Activated naive CD4-positive, alpha-beta T cell treated with anti-CD3 and anti-CD28 coated beads for 36 hours (primary cell): ENCODE measurements at regions of chr4 and their contacts with region 1.

Region 1: DNA sequence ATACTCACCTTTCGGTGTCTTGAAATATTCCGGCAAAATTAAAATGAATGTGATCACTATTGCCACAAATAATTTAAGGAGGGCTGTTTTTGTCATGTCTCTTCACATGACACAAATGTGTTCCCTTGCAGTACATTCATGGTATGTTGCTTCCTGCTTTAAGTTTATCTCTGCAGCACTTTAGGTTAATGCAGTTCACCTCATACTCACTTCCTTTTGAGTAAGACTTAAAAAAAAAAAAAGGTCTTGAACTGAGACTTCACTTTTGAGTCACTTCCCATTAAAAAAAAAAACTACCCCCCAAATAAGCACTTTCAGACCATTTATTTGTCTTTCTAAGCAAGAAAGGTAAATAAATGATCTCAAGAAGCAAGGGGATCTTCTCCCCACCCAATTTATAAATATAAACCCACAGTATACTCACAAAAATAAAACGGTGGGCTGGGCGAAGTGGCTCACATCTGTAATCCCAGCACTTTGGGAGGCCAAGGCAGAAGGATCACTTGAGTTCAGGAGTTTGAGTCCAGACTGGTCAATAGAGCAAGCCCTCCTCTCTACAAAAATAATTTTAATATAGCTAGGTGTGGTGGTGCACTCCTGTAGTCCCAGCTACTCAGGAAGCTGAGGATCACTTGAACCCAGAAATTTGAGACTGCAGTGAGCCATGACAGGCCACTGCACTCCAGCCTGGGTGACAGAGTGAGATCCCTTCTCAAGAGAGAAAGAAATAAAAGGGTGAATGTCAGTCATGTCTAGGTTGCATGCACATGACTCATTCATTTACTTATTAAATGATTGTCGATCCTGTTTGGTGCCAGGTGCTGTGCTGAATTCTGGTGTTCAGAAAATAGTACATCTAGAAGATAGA is at the start of gene TMEM156:
- DNase-seq: peak; percentile 65
- H3K4me3 Mint-ChIP-seq: peak within 1 kb of the TSS; percentile 77
- H3K27ac Mint-ChIP-seq: peak within 1 kb of the TSS; percentile 89
- H3K4me1 Mint-ChIP-seq: peaks cover 57% of the 10 kb centered on the region
- H3K27me3 Mint-ChIP-seq: no peaks in the 10 kb centered on the region
- total RNA-seq, gene TMEM156: 10.2 to 11.3 TPM

Region 2: GRCh38 chr4:37891260-37892159 is 1140.9 kb before region 1 on chr4:
- CTCF ChIA-PET with region 1: no interaction called
- intact Hi-C with region 1: loop called (anchors 5 kb)
- DNase-seq: peak; percentile 74
- H3K4me3 Mint-ChIP-seq: peak overlapping the region; percentile 89
- H3K27ac Mint-ChIP-seq: peak overlapping the region; percentile 86
- H3K4me1 Mint-ChIP-seq: peaks cover 37% of the 10 kb centered on the region
- H3K27me3 Mint-ChIP-seq: peaks cover 8% of the 10 kb centered on the region

Region 3: GRCh38 chr4:38730830-38731646 is 301.4 kb before region 1 on chr4:
- CTCF ChIA-PET with region 1: no interaction called
- intact Hi-C with region 1: no loop called
- DNase-seq: peak; percentile 93
- H3K4me3 Mint-ChIP-seq: no peak overlapping the region
- H3K27ac Mint-ChIP-seq: no peak overlapping the region
- H3K4me1 Mint-ChIP-seq: peaks cover 16% of the 10 kb centered on the region
- H3K27me3 Mint-ChIP-seq: no peaks in the 10 kb centered on the region

Region 4: GRCh38 chr4:38815885-38816782 is 216.3 kb before region 1 on chr4:
- CTCF ChIA-PET with region 1: interaction called, 3 read pairs
- intact Hi-C with region 1: loop called (anchors 5 kb)
- DNase-seq: no peak
- H3K4me3 Mint-ChIP-seq: no peak overlapping the region
- H3K27ac Mint-ChIP-seq: peak overlapping the region; percentile 29
- H3K4me1 Mint-ChIP-seq: peaks cover 25% of the 10 kb centered on the region
- H3K27me3 Mint-ChIP-seq: no peaks in the 10 kb centered on the region

Region 5: GRCh38 chr4:38837849-38838248 is 194.6 kb before region 1 on chr4:
- CTCF ChIA-PET with region 1: no interaction called
- intact Hi-C with region 1: no loop called
- DNase-seq: no peak
- H3K4me3 Mint-ChIP-seq: no peak overlapping the region
- H3K27ac Mint-ChIP-seq: peak overlapping the region; percentile 43
- H3K4me1 Mint-ChIP-seq: peaks cover 23% of the 10 kb centered on the region
- H3K27me3 Mint-ChIP-seq: no peaks in the 10 kb centered on the region

Region 6: GRCh38 chr4:38939165-38939564 is 93.3 kb before region 1 on chr4:
- CTCF ChIA-PET with region 1: no interaction called
- intact Hi-C with region 1: loop called (anchors 1 kb)
- DNase-seq: no peak
- H3K4me3 Mint-ChIP-seq: no peak overlapping the region
- H3K27ac Mint-ChIP-seq: peak overlapping the region; percentile 27
- H3K4me1 Mint-ChIP-seq: peaks cover 31% of the 10 kb centered on the region
- H3K27me3 Mint-ChIP-seq: no peaks in the 10 kb centered on the region

Region 7: DNA sequence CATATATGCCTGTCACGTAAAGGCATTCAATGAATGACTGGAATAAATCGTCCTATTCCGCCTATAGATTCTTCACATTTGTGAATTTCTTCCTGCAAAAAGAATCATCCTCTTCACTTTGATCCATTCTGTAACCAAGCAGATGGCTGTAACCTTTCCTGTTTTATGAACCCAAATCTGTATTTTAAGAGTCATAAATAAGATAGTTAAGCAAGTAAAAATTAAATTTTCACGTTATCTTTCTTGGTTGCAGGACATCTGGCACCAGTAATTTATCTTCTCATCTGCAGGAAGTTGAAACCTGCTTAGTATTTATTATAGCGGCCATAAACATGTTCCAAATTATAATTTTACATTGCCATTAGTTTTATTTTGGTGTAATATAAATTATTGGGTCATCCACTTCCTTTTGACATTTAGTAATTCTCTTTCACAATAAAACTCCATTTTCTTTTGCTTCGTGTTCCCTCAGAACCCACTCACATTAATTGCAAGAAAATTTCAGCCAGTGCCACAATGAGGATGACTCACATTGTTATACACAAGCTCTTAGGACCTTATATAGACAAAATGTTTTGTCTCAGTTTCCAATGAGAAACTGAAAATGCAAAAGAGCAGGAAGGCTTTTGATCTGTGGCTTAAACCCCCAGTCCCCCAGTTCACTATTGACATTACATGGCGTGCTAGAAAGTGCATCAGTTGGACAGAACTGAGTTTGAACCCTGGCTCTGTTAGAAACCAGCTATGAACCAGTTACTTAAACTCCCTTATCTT is 51.4 kb before region 1 on chr4:
- CTCF ChIA-PET with region 1: no interaction called
- intact Hi-C with region 1: loop called (anchors 1 kb)
- DNase-seq: peak; percentile 51
- H3K4me3 Mint-ChIP-seq: no peak overlapping the region
- H3K27ac Mint-ChIP-seq: peak overlapping the region; percentile 87
- H3K4me1 Mint-ChIP-seq: peaks cover 62% of the 10 kb centered on the region
- H3K27me3 Mint-ChIP-seq: no peaks in the 10 kb centered on the region

Region 8: DNA sequence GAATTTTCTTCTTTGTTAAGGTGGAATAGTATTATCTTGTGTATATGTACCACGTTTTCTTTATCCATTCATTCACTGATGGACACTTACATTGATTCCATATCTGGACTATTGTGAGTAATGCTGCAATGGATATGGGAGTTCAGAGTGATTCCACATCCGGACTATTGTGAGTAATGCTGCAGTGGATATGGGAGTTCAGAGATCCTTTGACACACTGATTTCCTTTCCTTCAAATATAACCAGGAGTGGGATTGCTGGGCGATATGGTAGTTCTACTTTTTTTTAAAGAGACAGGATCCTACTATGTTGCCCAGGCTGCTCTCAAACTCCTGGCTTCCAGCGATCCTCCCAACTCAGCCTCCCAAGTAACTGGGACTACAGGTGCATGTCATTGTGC is 12.3 kb before region 1 on chr4:
- CTCF ChIA-PET with region 1: no interaction called
- intact Hi-C with region 1: no loop called
- DNase-seq: no peak
- H3K4me3 Mint-ChIP-seq: no peak overlapping the region
- H3K27ac Mint-ChIP-seq: no peak overlapping the region
- H3K4me1 Mint-ChIP-seq: peaks cover 5% of the 10 kb centered on the region
- H3K27me3 Mint-ChIP-seq: no peaks in the 10 kb centered on the region

Region 9: DNA sequence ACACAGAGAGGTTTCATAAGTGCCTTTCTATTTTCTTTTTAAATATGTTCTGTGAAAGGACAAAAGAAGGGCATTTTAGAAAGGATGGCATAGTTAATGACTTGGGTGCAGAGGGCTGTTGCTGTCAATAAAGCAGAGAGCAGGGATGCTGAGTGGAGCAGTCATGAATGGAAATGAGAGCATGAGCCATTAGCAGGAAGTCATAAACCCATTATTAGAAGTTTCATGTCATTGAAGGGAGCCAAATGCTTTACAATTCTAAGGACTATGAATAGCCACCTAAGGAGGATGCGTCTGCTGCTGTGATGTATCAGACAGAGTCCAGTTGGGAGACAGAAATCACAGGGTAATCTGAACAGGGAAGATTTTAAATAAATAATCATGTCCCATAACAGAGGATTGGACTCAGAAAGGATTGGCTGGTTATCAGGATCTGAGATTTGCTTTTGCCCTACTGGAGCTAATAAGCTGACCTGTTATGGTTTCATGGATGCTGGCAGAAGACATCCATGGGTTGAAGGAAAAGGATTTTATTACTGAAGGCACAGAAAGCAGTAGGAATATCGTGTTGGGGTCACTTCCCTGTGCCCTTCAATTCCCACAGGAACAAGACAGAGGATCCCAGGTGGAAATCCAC is 102.3 kb after region 1 on chr4:
- CTCF ChIA-PET with region 1: interaction called, 4 read pairs
- intact Hi-C with region 1: loop called (anchors 2 kb)
- DNase-seq: no peak
- H3K4me3 Mint-ChIP-seq: no peak overlapping the region
- H3K27ac Mint-ChIP-seq: no peak overlapping the region
- H3K4me1 Mint-ChIP-seq: peaks cover 10% of the 10 kb centered on the region
- H3K27me3 Mint-ChIP-seq: no peaks in the 10 kb centered on the region

Region 10: GRCh38 chr4:39697740-39698423 is 665.4 kb after region 1 on chr4 and contains the start of gene UBE2K:
- CTCF ChIA-PET with region 1: no interaction called
- intact Hi-C with region 1: loop called (anchors 5 kb)
- DNase-seq: peak; percentile 85
- H3K4me3 Mint-ChIP-seq: peak within 1 kb of the TSS; percentile 98
- H3K27ac Mint-ChIP-seq: peak within 1 kb of the TSS; percentile 98
- H3K4me1 Mint-ChIP-seq: peaks cover 32% of the 10 kb centered on the region
- H3K27me3 Mint-ChIP-seq: no peaks in the 10 kb centered on the region
- total RNA-seq, gene UBE2K: 60.6 to 69.5 TPM

Region 11: GRCh38 chr4:39928538-39928937 is 896.1 kb after region 1 on chr4:
- CTCF ChIA-PET with region 1: no interaction called
- intact Hi-C with region 1: no loop called
- DNase-seq: no peak
- H3K4me3 Mint-ChIP-seq: no peak overlapping the region
- H3K27ac Mint-ChIP-seq: peak overlapping the region; percentile 41
- H3K4me1 Mint-ChIP-seq: peaks cover 31% of the 10 kb centered on the region
- H3K27me3 Mint-ChIP-seq: no peaks in the 10 kb centered on the region